ENCODE measurements at regions of chr2 and their contacts with region 1.

Region 1: GRCh38 chr2:158753641-158754611 is 41.2 kb upstream of the DAPL1 start:
- DNase-seq: peak in 2 of 6 donors; percentile 11 to 59
- ATAC-seq: peak; percentile 89 to 98 (median 96)
- H3K4me3 ChIP-seq: peak overlapping the region in 2 of 4 donors; percentile 13 to 31
- H3K27ac ChIP-seq: no peak overlapping the region
- H3K4me1 ChIP-seq: peaks cover 0 to 6% (median 0%) of the 10 kb centered on the region in 3 donors
- H3K27me3 ChIP-seq: no peaks in the 10 kb centered on the region
- CTCF ChIP-seq: peak; percentile 74 to 83 (median 81)

Region 2: GRCh38 chr2:158034199-158034866 is 719.6 kb before region 1 on chr2:
- intact Hi-C with region 1: loop called in 2 of 3 experiments (anchors 5 kb)
- DNase-seq: peak in 3 of 6 donors; percentile 34 to 62 (median 49)
- ATAC-seq: peak; percentile 86 to 98 (median 94)
- H3K4me3 ChIP-seq: no peak overlapping the region
- H3K27ac ChIP-seq: no peak overlapping the region
- H3K4me1 ChIP-seq: no peaks in the 10 kb centered on the region
- H3K27me3 ChIP-seq: no peaks in the 10 kb centered on the region
- CTCF ChIP-seq: peak in 2 of 4 donors; percentile 33 to 36

Region 3: DNA sequence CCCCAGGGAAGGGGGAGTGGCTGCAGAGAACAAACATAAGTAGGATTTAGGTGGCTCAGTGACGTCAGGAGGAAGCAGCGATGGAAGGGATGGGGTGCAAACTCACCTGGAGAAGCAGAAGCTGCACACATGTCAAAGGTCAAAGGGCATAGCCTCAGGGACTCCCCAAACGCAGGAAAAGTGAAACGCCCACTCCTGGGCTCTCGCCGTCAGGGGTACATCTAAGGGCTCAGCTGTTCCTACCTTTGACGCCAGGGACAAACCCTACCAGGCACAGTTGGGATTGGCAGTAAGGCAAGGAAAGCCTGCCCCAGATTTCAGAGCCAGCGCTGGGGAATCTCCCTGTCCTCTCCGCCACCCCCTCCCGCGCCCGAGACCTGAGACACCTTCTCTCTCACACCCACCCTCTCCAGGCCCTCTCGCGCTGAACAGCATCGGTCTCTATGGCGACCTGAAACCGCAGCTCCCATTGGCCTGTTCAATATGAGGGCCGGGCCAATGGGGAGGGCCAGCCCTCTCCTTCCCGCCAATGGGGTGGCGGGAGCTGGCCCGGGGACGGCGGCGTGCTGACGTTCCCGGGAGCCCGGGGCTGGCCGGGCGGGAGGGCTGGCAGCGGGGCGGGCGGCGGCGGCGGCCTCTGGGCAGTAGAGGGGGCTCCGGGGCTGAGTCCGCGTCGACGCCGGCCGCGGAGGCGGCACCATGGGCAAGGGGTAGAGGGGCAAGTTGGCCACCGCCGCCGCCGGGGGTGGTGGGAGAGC is 297.4 kb before region 1 on chr2 and contains the starts of genes CCDC148 and PKP4:
- intact Hi-C with region 1: loop called in 1 of 3 experiments (anchors 5 kb)
- DNase-seq: peak; percentile 88 to 93 (median 90)
- ATAC-seq: peak; percentile 85 to 92 (median 87)
- H3K4me3 ChIP-seq: peak within 1 kb of the TSS; percentile 86 to 92 (median 90)
- H3K27ac ChIP-seq: peak within 1 kb of the TSS; percentile 95 to 97 (median 96)
- H3K4me1 ChIP-seq: peaks cover 0 to 16% (median 13%) of the 10 kb centered on the region in 3 donors
- H3K27me3 ChIP-seq: no peaks in the 10 kb centered on the region
- CTCF ChIP-seq: peak in 2 of 4 donors; percentile 5 to 8
- total RNA-seq, gene CCDC148: 0.38 to 1.5 (median 0.79) TPM
- total RNA-seq, gene PKP4: 23.6 to 46.2 (median 28.8) TPM